ENCODE measurements at regions of chr7 and their contacts with region 1.

Region 1: GRCh38 chr7:156232931-156233705 is 407.5 kb upstream of the RNF32 start:
- DNase-seq: no peak
- H3K4me3 ChIP-seq: no peak overlapping the region
- H3K27ac ChIP-seq: no peak overlapping the region
- H3K4me1 ChIP-seq: no peaks in the 10 kb centered on the region
- H3K27me3 ChIP-seq: no peaks in the 10 kb centered on the region
- CTCF ChIP-seq: no peak
- EP300 ChIP-seq: no peak
- POLR2A ChIP-seq: no peak

Region 2: DNA sequence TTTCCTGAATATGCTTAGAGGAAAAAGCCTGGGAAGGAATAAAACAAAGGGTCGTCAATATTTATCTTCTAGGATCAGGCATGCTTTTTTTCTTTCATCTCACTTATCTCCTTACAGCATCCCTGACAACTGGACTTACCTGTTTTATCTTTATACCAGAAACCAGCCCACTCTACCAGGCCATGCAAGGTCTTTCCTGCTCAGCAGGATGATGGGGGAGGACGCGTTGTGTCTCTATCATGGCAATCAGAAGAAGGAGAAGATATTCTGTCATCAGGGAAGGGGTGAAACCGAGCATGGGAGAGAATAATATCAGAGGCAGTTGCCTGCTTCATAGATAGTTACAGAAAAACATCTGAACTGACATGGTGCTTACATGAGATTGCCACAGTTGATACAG is 1735.4 kb before region 1 on chr7:
- in situ Hi-C with region 1: no loop called
- intact Hi-C with region 1: loop called (anchors 5 kb)
- DNase-seq: no peak
- H3K4me3 ChIP-seq: no peak overlapping the region
- H3K27ac ChIP-seq: no peak overlapping the region
- H3K4me1 ChIP-seq: no peaks in the 10 kb centered on the region
- H3K27me3 ChIP-seq: no peaks in the 10 kb centered on the region
- CTCF ChIP-seq: no peak
- EP300 ChIP-seq: no peak
- POLR2A ChIP-seq: no peak